Activated T-helper 2 cell treated with anti-CD3 and anti-CD28 coated beads, Interferon-gamma antibody, Interleukin-2, Interleukin-4, amounts not matched to agents 10 μg/mL and 5 μg/mL and 100 μg/mL, durations not matched to agents 14 hours and 24 hours and 36 hours (primary cell): ENCODE measurements at regions of chr19 and their contacts with region 1.

Region 1: DNA sequence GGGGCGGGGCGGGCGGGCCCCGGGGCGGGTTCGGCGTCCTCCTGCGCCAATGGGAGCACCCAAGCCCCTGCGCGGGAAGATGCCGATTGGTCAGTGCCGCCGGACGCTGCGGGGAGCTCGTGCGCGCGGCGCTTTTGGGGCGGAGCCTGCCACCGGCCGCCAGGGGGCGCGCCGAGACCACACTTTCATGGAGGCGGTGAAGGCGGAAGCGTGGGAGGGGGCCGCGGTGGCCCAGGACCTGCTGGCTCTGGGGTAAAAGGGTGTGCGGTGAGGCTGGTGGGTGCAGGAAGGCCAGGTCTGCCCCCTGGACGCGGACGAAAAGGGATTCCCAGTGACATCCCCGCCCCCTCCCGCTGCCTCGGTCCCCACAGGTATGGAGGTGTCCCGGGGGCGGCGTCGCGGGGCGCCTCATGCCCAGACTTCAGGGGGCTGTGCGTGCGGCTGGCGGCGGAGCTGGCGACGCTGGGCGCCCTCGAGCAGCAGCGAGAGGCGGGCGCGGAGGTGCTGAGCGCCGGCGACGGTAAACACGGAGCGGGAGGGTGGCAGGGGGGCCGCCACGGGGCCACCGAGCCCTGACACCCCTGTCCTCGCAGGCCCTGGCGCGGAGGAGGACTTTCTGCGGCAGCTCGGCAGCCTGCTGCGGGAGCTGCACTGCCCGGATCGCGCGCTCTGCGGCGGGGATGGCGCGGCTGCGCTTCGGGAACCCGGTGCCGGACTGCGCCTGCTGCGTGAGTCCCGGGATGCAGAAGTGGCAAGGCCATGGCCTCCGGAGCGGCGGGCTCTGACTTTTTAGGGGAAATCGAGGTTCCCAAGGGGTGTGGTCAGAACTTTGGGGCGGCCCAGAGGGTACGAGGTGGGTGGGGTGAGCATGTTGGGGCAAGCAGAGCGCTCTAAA is at the start of gene FAM98C:
- DNase-seq: peak; percentile 97
- H3K4me3 Mint-ChIP-seq: peak within 1 kb of the TSS; percentile 87
- H3K27ac Mint-ChIP-seq: peak within 1 kb of the TSS; percentile 94
- H3K4me1 Mint-ChIP-seq: peaks cover 8% of the 10 kb centered on the region
- H3K27me3 Mint-ChIP-seq: peaks cover 3% of the 10 kb centered on the region
- total RNA-seq, gene FAM98C: 32.7 and 34.5 TPM in 2 replicates

Region 2: GRCh38 chr19:38441657-38442348 is 38.6 kb after region 1 on chr19:
- intact Hi-C with region 1: loop called (anchors 2 kb)
- DNase-seq: no peak
- H3K4me3 Mint-ChIP-seq: no peak overlapping the region
- H3K27ac Mint-ChIP-seq: no peak overlapping the region
- H3K4me1 Mint-ChIP-seq: peaks cover 9% of the 10 kb centered on the region
- H3K27me3 Mint-ChIP-seq: peaks cover 2% of the 10 kb centered on the region

Region 3: DNA sequence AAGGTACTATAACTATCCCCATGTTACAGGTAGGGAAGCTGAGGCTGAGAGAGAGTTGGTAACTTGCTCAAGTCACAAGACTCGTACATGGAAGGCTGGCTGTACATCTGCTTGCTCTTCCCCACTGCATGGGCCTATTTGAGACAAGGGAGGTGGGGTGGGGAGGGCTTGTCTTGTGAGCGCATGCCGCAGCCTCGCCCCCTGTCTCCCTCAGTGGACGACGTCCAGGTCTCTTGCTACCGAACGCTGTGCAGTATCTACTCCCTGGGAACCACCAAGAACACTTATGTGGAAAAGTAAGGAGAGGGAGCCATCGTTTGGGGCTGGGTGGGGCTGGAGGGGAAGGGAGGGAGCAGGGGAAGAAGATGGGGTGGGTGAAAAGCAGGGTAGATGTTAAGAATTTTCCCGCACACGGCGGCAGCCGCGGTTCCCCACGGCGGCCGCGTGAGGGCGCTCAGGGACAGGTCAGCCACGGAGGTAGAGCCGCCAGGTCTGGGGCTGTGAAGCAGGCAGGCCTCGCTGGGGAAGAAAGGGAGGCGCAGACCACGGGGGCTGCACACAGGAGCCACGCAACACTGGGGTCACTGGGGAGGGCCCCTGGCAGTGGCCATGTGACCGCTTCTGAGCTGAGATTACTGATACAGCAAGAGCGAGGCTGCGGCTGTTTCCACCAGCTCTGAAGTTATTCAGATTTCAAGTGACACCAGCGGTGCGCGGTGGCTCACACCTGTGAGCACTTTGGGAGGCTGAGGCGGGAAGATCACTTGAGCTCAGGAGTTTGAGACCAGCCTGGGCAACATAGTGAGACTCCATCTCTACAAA is 111.8 kb after region 1 on chr19:
- intact Hi-C with region 1: loop called (anchors 10 kb)
- DNase-seq: peak; percentile 71
- H3K4me3 Mint-ChIP-seq: no peak overlapping the region
- H3K27ac Mint-ChIP-seq: no peak overlapping the region
- H3K4me1 Mint-ChIP-seq: peaks cover 19% of the 10 kb centered on the region
- H3K27me3 Mint-ChIP-seq: peaks cover 3% of the 10 kb centered on the region